ENCODE measurements at regions of chr1 and their contacts with region 1.

Region 1: DNA sequence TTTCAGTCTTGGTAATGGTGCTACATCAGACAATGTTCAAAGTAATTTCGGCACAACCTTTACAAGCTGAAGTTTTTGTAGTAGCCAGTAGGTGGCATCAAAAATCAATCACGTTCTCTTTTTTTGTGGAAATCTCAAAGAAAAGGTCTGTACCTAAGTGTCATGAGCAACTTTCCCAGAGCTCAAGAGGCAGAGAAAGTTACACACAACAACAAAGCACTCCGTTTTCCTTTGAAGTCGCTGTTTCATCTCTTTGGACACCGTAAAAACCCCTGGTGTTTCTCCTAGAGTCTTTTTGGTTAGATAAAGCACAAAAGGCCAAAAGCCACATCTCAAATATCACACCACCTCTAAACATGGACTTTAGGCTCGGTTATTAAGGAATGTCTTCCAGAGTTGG is 131.6 kb downstream of the LHX8 start:
- DNase-seq: peak in 5 of 9 donors; percentile 6 to 27 (median 11)
- ATAC-seq: peak; percentile 44
- H3K4me3 ChIP-seq: no peak overlapping the region
- H3K4me3 Mint-ChIP-seq: no peak overlapping the region
- H3K27ac ChIP-seq: no peak overlapping the region
- H3K27ac Mint-ChIP-seq: peak overlapping the region in 1 of 9 donors; percentile 12
- H3K4me1 ChIP-seq: no peaks in the 10 kb centered on the region
- H3K4me1 Mint-ChIP-seq: no peaks in the 10 kb centered on the region
- H3K27me3 ChIP-seq: no peaks in the 10 kb centered on the region
- H3K27me3 Mint-ChIP-seq: peaks cover 0 to 3% (median 0%) of the 10 kb centered on the region in 5 donors

Region 2: DNA sequence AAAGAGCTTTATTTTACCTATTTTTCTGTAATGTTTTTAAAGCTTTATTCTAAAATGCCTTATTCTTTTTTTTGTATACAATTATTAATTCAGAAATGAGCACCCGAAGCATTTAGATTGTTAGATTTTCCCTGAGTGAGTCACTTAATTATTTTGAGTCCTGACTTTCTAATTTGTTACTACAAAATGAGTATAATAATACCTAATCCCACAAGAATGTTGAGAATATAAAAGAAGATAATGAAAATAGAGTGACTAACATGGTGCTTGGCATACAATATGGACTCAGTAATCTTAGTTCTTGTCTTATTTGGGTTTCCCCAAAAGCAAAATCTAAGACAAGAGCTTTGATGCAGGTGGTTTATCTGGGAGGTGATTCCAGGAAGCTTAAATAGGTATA is 10.6 kb after region 1 on chr1:
- CTCF ChIA-PET with region 1: interaction called, 11 read pairs
- POLR2A ChIA-PET with region 1: no interaction called
- intact Hi-C with region 1: no loop called
- DNase-seq: no peak
- ATAC-seq: no peak
- H3K4me3 ChIP-seq: no peak overlapping the region
- H3K4me3 Mint-ChIP-seq: no peak overlapping the region
- H3K27ac ChIP-seq: no peak overlapping the region
- H3K27ac Mint-ChIP-seq: no peak overlapping the region
- H3K4me1 ChIP-seq: no peaks in the 10 kb centered on the region
- H3K4me1 Mint-ChIP-seq: no peaks in the 10 kb centered on the region
- H3K27me3 ChIP-seq: no peaks in the 10 kb centered on the region
- H3K27me3 Mint-ChIP-seq: peaks cover 0 to 4% (median 3%) of the 10 kb centered on the region in 5 donors

Region 3: GRCh38 chr1:75373533-75374320 is 107.9 kb after region 1 on chr1:
- CTCF ChIA-PET with region 1: interaction called, 6 read pairs
- POLR2A ChIA-PET with region 1: no interaction called
- intact Hi-C with region 1: loop called in 1 of 2 experiments (anchors 2 kb)
- DNase-seq: no peak
- ATAC-seq: no peak
- H3K4me3 ChIP-seq: no peak overlapping the region
- H3K4me3 Mint-ChIP-seq: peak overlapping the region in 1 of 10 donors; percentile 99
- H3K27ac ChIP-seq: no peak overlapping the region
- H3K27ac Mint-ChIP-seq: peak overlapping the region in 1 of 9 donors; percentile 43
- H3K4me1 ChIP-seq: no peaks in the 10 kb centered on the region
- H3K4me1 Mint-ChIP-seq: no peaks in the 10 kb centered on the region
- H3K27me3 ChIP-seq: no peaks in the 10 kb centered on the region
- H3K27me3 Mint-ChIP-seq: peaks cover 0 to 7% (median 0%) of the 10 kb centered on the region in 5 donors

Region 4: DNA sequence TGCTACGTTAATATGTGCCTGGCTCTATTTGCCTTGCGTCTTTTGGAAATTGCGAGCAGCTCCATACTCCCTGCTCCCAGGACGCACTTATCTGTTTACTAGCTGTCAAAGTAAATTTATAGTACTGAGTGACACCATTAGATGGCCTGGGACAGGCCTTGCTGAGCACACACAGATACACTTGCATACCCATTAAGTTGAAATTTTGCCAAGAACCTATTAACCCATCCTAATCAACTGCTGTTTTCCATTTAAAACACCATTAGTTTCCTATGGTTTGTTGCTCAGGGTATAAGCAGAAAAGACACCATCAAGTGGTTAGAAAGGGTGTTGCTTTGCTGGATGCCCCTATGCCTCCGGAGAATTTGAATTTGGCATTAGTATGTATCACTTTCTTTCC is 157.8 kb after region 1 on chr1:
- CTCF ChIA-PET with region 1: no interaction called
- POLR2A ChIA-PET with region 1: no interaction called
- intact Hi-C with region 1: loop called in 1 of 2 experiments (anchors 1 kb)
- DNase-seq: no peak
- ATAC-seq: no peak
- H3K4me3 ChIP-seq: no peak overlapping the region
- H3K4me3 Mint-ChIP-seq: no peak overlapping the region
- H3K27ac ChIP-seq: no peak overlapping the region
- H3K27ac Mint-ChIP-seq: no peak overlapping the region
- H3K4me1 ChIP-seq: no peaks in the 10 kb centered on the region
- H3K4me1 Mint-ChIP-seq: no peaks in the 10 kb centered on the region
- H3K27me3 ChIP-seq: no peaks in the 10 kb centered on the region
- H3K27me3 Mint-ChIP-seq: no peaks in the 10 kb centered on the region

Region 5: GRCh38 chr1:75632350-75632949 is 366.7 kb after region 1 on chr1:
- CTCF ChIA-PET with region 1: interaction called, 4 read pairs
- POLR2A ChIA-PET with region 1: no interaction called
- intact Hi-C with region 1: loop called in 1 of 2 experiments (anchors 1 kb)
- DNase-seq: no peak
- ATAC-seq: no peak
- H3K4me3 ChIP-seq: no peak overlapping the region
- H3K4me3 Mint-ChIP-seq: no peak overlapping the region
- H3K27ac ChIP-seq: no peak overlapping the region
- H3K27ac Mint-ChIP-seq: no peak overlapping the region
- H3K4me1 ChIP-seq: no peaks in the 10 kb centered on the region
- H3K4me1 Mint-ChIP-seq: no peaks in the 10 kb centered on the region
- H3K27me3 ChIP-seq: no peaks in the 10 kb centered on the region
- H3K27me3 Mint-ChIP-seq: peaks cover 0 to 30% (median 28%) of the 10 kb centered on the region in 5 donors